Breast epithelium (tissue), 4 donors: ENCODE measurements at regions of chr7 and their contacts with region 1.

Region 1: GRCh38 chr7:2709553-2710285 is 21.7 kb downstream of the AMZ1 start:
- DNase-seq: peak in 1 of 2 donors; percentile 25
- H3K4me3 ChIP-seq: peak overlapping the region; percentile 6 to 49 (median 26)
- H3K27ac ChIP-seq: no peak overlapping the region
- H3K4me1 ChIP-seq: no peaks in the 10 kb centered on the region
- H3K27me3 ChIP-seq: no peaks in the 10 kb centered on the region
- CTCF ChIP-seq: peak; percentile 52 to 69 (median 53)
- POLR2A ChIP-seq: no peak

Region 2: GRCh38 chr7:974820-975681 is 1734.7 kb before region 1 on chr7 and contains the start of gene COX19:
- intact Hi-C with region 1: loop called (anchors 5 kb)
- DNase-seq: peak; percentile 74 to 87
- H3K4me3 ChIP-seq: peak within 1 kb of the TSS; percentile 69 to 88 (median 81)
- H3K27ac ChIP-seq: peak within 1 kb of the TSS; percentile 94 to 97
- H3K4me1 ChIP-seq: peaks cover 0 to 10% of the 10 kb centered on the region in 2 donors
- H3K27me3 ChIP-seq: no peaks in the 10 kb centered on the region
- CTCF ChIP-seq: no peak
- POLR2A ChIP-seq: peak; percentile 55
- total RNA-seq, gene COX19: 8.5 to 17.3 (median 8.8) TPM